Heart right ventricle (tissue), 16 donors: ENCODE measurements at regions of chr9 and their contacts with region 1.

Region 1: DNA sequence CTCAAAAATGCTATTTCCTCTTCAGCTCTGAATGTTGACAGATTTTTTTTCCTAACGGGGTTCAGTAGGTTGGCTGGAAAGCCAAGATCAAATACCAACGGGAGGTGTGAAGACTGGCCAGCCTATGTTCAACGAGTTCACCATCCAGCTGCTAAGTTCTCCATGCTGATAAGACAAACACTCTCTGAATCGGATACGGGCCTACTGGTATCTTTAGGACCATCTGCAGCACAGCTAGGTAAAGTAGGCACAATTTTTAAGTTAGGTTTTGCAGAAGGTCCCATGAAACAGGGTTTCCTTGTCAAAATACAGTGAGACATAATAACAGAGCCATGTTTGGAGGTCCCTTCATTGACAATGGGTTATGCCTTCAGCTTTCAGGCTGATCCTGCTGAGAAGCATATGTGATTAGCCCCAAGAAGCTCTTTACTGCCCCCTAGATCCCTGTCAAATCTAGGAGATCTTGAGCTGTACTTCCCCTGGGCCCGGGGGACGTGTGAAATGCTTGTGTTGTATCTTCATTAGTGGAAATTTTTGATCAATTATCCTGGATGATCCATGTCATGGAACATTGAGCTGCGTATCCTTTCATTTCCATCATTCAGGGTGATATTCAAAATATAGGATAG is 60.6 kb downstream of the PGM5 start:
- DNase-seq: no peak
- ATAC-seq: no peak
- H3K4me3 ChIP-seq: no peak overlapping the region
- H3K27ac ChIP-seq: peak overlapping the region in 7 of 10 donors; percentile 43 to 90 (median 84)
- H3K4me1 ChIP-seq: peaks cover 0 to 64% (median 27%) of the 10 kb centered on the region in 9 donors
- H3K27me3 ChIP-seq: no peaks in the 10 kb centered on the region
- CTCF ChIP-seq: peak in 6 of 9 donors; percentile 9 to 40 (median 20)

Region 2: GRCh38 chr9:68476847-68477246 is 59.8 kb after region 1 on chr9:
- intact Hi-C with region 1: loop called in 1 of 10 experiments (anchors 5 kb)
- DNase-seq: peak in 1 of 2 donors; percentile 51
- ATAC-seq: peak in 7 of 8 donors; percentile 53 to 71 (median 66)
- H3K4me3 ChIP-seq: no peak overlapping the region
- H3K27ac ChIP-seq: peak overlapping the region in 6 of 10 donors; percentile 8 to 70 (median 17)
- H3K4me1 ChIP-seq: peaks cover 5 to 51% (median 23%) of the 10 kb centered on the region in 9 donors
- H3K27me3 ChIP-seq: no peaks in the 10 kb centered on the region
- CTCF ChIP-seq: no peak